Right cardiac atrium (tissue), 5 donors: ENCODE measurements at regions of chr5 and their contacts with region 1.

Region 1: DNA sequence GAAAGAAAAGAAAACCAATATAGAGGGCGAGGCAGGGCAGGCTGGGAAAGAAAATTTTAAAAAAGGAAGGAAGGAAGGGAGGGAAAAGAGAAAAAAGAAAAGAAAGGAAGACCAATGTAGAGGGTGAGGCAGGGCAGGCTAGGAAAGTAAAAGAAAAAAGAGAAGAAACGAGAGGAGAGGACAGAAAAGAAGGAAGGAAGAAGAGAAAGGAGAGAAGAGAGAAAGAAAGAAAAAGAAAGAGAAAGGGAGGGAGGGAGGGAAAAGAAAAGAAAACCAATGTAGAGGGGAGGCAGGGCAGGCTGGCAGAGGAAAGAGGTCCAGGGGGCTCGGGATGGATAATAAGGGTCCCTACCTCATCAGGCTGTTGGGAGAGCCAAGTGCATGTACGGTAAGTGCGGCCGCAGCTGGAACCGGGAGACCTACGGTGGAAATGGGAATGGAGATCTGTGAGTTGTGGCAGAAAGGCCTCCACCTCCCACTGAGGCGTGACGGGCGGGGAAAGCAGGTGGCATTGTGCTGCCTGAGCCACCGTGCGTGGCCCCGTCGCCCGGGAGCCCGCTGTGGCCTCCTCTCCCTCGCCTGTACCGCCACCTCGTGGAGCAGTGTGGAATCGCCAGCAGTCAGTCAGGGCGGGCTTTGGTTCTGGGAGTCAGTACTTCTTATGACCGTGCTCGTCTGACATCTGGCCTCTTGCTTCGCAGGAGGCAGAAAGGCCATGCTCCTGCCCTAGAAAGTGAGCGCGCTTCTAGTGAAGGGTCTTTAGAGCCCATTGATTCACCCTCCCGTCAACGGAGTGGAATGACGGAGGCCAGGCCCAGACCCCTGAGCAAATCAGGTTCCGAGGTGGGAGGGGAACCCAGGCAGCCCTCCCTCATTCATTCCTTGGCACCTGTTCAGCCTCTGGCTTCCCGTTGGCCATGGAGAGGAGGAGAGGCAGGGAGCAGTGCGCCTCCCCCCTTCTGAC is 10.4 kb upstream of the NHP2 start:
- DNase-seq: peak; percentile 79 to 93 (median 92)
- ATAC-seq: peak; percentile 92 to 95
- H3K4me3 ChIP-seq: no peak overlapping the region
- H3K27ac ChIP-seq: no peak overlapping the region
- H3K4me1 ChIP-seq: no peaks in the 10 kb centered on the region
- H3K27me3 ChIP-seq: no peaks in the 10 kb centered on the region

Region 2: DNA sequence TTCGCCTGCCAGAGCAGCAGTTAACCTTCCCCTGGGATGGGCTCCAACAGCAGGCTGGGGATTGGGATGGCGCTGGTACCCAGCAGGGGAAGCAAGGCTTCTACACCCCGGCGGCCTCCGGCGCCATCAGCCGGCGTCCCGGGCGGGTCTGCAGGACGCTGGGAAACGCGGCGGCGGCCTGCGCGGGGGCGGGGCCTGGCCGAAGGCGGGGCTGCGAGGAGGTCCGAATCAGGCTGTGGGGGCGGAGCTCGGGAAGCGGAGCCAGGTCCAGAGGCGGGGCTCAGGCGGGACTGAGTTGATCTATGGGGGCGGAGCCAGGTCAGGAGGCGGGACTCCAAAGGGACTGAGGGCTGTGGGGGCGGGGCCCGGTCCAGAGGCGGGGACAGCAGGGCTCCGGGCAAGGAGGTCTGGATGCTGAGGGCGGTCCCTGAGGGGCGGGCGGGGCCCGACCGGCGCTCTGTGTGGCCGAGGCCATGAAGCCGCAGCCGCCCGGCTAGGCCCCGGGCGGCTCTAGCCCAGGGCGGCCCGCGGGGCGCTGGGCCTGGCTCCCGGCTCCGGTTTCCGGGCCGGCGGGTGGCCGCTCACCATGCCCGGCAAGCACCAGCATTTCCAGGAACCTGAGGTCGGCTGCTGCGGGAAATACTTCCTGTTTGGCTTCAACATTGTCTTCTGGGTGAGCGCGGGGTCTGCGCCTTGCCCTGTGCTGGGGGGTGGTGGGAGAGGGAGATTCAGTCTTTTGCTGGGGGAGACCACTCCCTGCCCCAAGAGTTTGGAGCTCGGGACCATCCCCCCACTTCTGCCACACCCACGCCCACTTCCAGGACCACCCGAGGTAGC is 1516.8 kb before region 1 on chr5 and contains the start of gene TSPAN17:
- intact Hi-C with region 1: no loop called
- DNase-seq: peak; percentile 100
- ATAC-seq: peak; percentile 98 to 99
- H3K4me3 ChIP-seq: peak within 1 kb of the TSS; percentile 84
- H3K27ac ChIP-seq: peak within 1 kb of the TSS; percentile 75
- H3K4me1 ChIP-seq: peaks cover 1% of the 10 kb centered on the region
- H3K27me3 ChIP-seq: no peaks in the 10 kb centered on the region
- total RNA-seq, gene TSPAN17: 16.1 to 23.7 (median 18.8) TPM

Region 3: DNA sequence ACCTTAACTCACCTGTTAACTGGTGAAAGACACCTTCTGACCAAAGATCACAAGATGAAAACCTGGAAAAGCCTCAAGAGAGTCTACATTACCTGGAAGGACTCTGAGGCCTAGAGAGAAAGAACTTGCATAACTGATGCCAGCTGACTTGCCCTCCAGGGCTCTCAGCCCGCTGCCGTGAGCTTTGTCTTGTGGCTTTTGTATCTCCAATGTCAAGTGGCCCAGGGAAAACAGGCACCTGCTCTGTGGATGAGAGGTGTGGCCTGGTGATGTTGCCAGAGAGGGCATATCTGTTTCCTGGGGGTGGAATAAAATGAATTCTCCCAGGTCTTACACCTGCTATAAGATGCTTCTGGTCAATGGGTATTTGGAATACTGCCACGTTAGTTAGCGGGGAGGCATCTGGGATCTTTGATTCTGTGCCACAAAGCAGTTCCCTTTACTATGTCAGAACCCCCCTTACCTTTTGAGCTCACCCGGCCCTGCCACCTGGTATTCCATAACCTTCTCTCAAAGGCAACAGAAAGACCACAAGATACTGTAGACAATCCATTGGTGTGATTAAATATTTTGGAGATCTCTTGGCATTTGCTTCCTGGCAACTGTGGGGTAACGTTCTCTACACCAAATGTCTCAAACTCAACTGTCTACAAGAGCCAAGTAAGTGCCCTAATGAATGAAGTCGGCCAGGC is 105.6 kb before region 1 on chr5:
- intact Hi-C with region 1: no loop called
- DNase-seq: no peak
- ATAC-seq: no peak
- H3K4me3 ChIP-seq: no peak overlapping the region
- H3K27ac ChIP-seq: no peak overlapping the region
- H3K4me1 ChIP-seq: no peaks in the 10 kb centered on the region
- H3K27me3 ChIP-seq: no peaks in the 10 kb centered on the region

Region 4: GRCh38 chr5:178075840-178076548 is 88.1 kb before region 1 on chr5:
- intact Hi-C with region 1: loop called (anchors 1 to 10 kb)
- DNase-seq: peak; percentile 59 to 81 (median 79)
- ATAC-seq: peak; percentile 80 to 81
- H3K4me3 ChIP-seq: no peak overlapping the region
- H3K27ac ChIP-seq: no peak overlapping the region
- H3K4me1 ChIP-seq: no peaks in the 10 kb centered on the region
- H3K27me3 ChIP-seq: no peaks in the 10 kb centered on the region

Region 5: GRCh38 chr5:178204182-178204894 is 40.3 kb after region 1 on chr5 and contains the start of gene HNRNPAB:
- intact Hi-C with region 1: no loop called
- DNase-seq: peak; percentile 95 to 97 (median 97)
- ATAC-seq: peak; percentile 92 to 96
- H3K4me3 ChIP-seq: peak within 1 kb of the TSS; percentile 63
- H3K27ac ChIP-seq: peak within 1 kb of the TSS; percentile 73
- H3K4me1 ChIP-seq: peaks cover 9% of the 10 kb centered on the region
- H3K27me3 ChIP-seq: no peaks in the 10 kb centered on the region
- total RNA-seq, gene HNRNPAB: 75.3 to 125 (median 86.9) TPM

Region 6: GRCh38 chr5:178590141-178590923 is 426.3 kb after region 1 on chr5 and contains the start of gene COL23A1:
- intact Hi-C with region 1: no loop called
- DNase-seq: peak; percentile 78 to 90 (median 88)
- ATAC-seq: peak; percentile 90
- H3K4me3 ChIP-seq: peak within 1 kb of the TSS; percentile 27
- H3K27ac ChIP-seq: no peak within 1 kb of the TSS
- H3K4me1 ChIP-seq: peaks cover 3% of the 10 kb centered on the region
- H3K27me3 ChIP-seq: no peaks in the 10 kb centered on the region
- total RNA-seq, gene COL23A1: 5.5 to 13.6 (median 8.8) TPM